Endothelial cell of umbilical vein (primary cell): ENCODE measurements at regions of chr19 and their contacts with region 1.

Region 1: GRCh38 chr19:48970923-48971395 is 5.8 kb downstream of the FTL start:
- DNase-seq: peak; percentile 81
- H3K4me3 ChIP-seq: no peak overlapping the region
- H3K27ac ChIP-seq: no peak overlapping the region
- H3K4me1 ChIP-seq: no peaks in the 10 kb centered on the region
- H3K27me3 ChIP-seq: no peaks in the 10 kb centered on the region
- CTCF ChIP-seq: peak; percentile 94 to 95
- POLR2A ChIP-seq: no peak

Region 2: DNA sequence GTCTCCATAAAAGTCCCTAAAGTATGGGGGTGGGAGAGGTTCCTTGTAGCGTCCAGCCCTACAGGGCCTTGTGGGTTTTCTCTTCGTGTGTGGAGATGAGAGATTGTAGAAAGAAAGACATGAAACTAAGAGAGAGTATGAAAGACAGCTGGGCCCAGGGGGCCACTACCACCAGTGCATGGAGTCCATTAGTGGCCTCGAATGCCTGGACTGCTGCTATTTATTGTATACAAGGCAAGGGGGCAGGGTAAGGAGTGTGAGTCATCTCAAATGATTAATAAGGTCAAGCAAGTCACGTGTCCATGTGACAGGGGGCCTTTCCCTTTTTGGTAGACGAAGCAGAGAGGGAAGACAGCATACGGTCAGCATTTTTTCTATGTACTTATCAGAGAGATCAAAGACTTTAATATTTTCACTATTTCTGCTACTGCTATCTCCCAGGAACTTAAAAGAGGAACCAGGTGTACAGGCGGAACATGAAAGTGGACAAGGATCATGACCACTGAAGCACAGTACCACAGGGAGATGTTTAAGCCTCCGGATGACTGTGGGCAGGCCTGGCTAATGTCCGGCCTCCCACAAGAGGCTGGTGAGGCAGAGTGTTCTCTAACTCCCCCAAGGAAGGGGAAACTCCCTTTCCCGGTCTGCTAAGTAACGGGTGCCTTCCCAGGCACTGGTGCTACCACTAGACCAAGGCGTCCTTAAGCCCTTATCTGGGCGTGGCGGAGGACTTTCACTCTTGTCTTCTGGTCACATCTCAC is 190.1 kb before region 1 on chr19:
- CTCF ChIA-PET with region 1: interaction called, 25 read pairs
- POLR2A ChIA-PET with region 1: no interaction called
- dilution Hi-C with region 1: no loop called
- intact Hi-C with region 1: no loop called
- DNase-seq: peak; percentile 43
- H3K4me3 ChIP-seq: no peak overlapping the region
- H3K27ac ChIP-seq: peak overlapping the region; percentile 53
- H3K4me1 ChIP-seq: peaks cover 9% of the 10 kb centered on the region
- H3K27me3 ChIP-seq: no peaks in the 10 kb centered on the region
- CTCF ChIP-seq: no peak
- POLR2A ChIP-seq: no peak

Region 3: GRCh38 chr19:48835734-48836088 is 135.2 kb before region 1 on chr19:
- CTCF ChIA-PET with region 1: interaction called, 39 read pairs
- POLR2A ChIA-PET with region 1: no interaction called
- dilution Hi-C with region 1: no loop called
- intact Hi-C with region 1: loop called (anchors 1 kb)
- DNase-seq: peak; percentile 87
- H3K4me3 ChIP-seq: peak overlapping the region; percentile 38 to 61 (median 57)
- H3K27ac ChIP-seq: peak overlapping the region; percentile 52
- H3K4me1 ChIP-seq: peaks cover 5% of the 10 kb centered on the region
- H3K27me3 ChIP-seq: no peaks in the 10 kb centered on the region
- CTCF ChIP-seq: peak; percentile 88 to 92
- POLR2A ChIP-seq: no peak

Region 4: GRCh38 chr19:48872182-48872883 is 98.6 kb before region 1 on chr19 and contains the start of gene PPP1R15A:
- CTCF ChIA-PET with region 1: interaction called, 45 read pairs
- POLR2A ChIA-PET with region 1: interaction called, 14 read pairs
- dilution Hi-C with region 1: no loop called
- intact Hi-C with region 1: no loop called
- DNase-seq: peak; percentile 100
- H3K4me3 ChIP-seq: peak within 1 kb of the TSS; percentile 93 to 100 (median 100)
- H3K27ac ChIP-seq: peak within 1 kb of the TSS; percentile 100
- H3K4me1 ChIP-seq: peaks cover 29% of the 10 kb centered on the region
- H3K27me3 ChIP-seq: no peaks in the 10 kb centered on the region
- CTCF ChIP-seq: no peak
- POLR2A ChIP-seq: peak; percentile 100
- total RNA-seq, gene PPP1R15A: 67.4 and 73.4 TPM in 2 replicates

Region 5: GRCh38 chr19:48933382-48933932 is 37.5 kb before region 1 on chr19 and contains the start of gene DHDH:
- CTCF ChIA-PET with region 1: interaction called, 17 read pairs
- POLR2A ChIA-PET with region 1: no interaction called
- dilution Hi-C with region 1: no loop called
- intact Hi-C with region 1: no loop called
- DNase-seq: peak; percentile 66
- H3K4me3 ChIP-seq: peak within 1 kb of the TSS; percentile 11 to 49 (median 46)
- H3K27ac ChIP-seq: no peak within 1 kb of the TSS
- H3K4me1 ChIP-seq: peaks cover 9% of the 10 kb centered on the region
- H3K27me3 ChIP-seq: peaks cover 2 to 8% of the 10 kb centered on the region in 2 experiments
- CTCF ChIP-seq: no peak
- POLR2A ChIP-seq: no peak
- total RNA-seq, gene DHDH: not detected in 2 replicates

Region 6: DNA sequence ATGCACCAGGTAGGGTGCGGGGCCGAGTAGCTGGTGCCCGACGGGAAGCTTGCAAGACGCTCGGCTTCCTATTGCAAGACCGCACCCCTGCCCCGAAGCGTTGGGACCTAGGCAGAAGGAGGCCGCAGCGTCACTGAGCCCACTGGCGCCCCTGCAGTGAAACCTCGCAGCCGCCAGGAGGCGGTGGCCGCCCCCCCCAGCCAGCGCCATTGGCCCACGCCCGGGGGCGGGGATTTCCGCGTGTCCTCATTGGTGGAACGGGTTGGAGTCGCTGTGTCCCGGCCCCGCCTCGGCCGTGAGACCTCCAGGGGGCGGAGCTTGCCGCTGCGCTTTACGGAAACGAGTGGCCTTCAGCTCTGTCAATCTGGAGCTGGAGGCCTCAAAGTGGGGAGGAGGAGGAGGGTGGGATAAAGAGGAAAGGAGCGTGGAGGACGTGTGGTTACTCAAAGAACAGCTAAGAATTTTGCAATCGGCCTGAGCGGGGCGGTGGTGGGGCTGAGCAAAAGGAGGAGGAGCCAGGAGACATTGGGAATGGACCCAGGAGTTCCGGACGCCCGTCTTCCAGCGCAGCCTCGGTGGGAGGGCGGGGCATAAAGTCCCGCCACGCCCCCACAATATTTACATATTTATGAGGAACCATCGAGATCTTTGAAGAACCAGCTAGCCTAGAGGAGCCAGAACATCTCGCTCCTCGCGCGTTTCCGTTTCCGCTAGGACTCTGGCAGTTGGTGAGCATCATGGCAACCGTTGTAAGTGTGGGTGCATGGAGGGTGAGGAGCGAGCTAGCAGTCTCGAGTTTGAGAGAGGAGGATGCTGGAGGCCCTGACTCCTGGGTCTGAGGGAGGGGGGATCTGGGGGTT is 22.4 kb after region 1 on chr19 and contains the starts of genes GYS1 and RUVBL2:
- CTCF ChIA-PET with region 1: interaction called, 41 read pairs
- POLR2A ChIA-PET with region 1: no interaction called
- dilution Hi-C with region 1: no loop called
- intact Hi-C with region 1: no loop called
- DNase-seq: peak; percentile 100
- H3K4me3 ChIP-seq: peak within 1 kb of the TSS; percentile 83 to 92 (median 86)
- H3K27ac ChIP-seq: peak within 1 kb of the TSS; percentile 61
- H3K4me1 ChIP-seq: peaks cover 14% of the 10 kb centered on the region
- H3K27me3 ChIP-seq: no peaks in the 10 kb centered on the region
- CTCF ChIP-seq: peak; percentile 98 to 100
- POLR2A ChIP-seq: peak; percentile 88
- total RNA-seq, gene GYS1: 53.9 and 58.9 TPM in 2 replicates
- total RNA-seq, gene RUVBL2: 110 and 115 TPM in 2 replicates

Region 7: DNA sequence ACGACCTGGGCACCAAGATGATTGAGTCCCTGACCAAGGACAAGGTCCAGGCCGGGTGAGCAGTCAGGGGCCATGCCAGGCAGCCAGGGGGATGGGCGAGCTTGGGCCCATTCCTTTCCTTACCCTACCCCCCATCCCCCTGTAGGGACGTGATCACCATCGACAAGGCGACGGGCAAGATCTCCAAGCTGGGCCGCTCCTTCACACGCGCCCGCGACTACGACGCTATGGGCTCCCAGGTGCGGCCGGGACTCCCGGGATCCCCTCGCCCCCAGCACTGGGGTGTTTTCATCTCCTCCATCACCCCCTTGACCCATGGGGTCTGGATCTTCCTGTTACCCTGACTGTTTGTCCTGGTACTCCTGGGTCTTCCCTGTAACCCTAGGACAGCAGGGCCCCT is 38.9 kb after region 1 on chr19:
- CTCF ChIA-PET with region 1: no interaction called
- POLR2A ChIA-PET with region 1: no interaction called
- dilution Hi-C with region 1: no loop called
- intact Hi-C with region 1: no loop called
- DNase-seq: no peak
- H3K4me3 ChIP-seq: no peak overlapping the region
- H3K27ac ChIP-seq: no peak overlapping the region
- H3K4me1 ChIP-seq: no peaks in the 10 kb centered on the region
- H3K27me3 ChIP-seq: no peaks in the 10 kb centered on the region
- CTCF ChIP-seq: no peak
- POLR2A ChIP-seq: no peak